Endothelial cell of umbilical vein (primary cell): ENCODE measurements at regions of chr9 and their contacts with region 1.

Region 1: DNA sequence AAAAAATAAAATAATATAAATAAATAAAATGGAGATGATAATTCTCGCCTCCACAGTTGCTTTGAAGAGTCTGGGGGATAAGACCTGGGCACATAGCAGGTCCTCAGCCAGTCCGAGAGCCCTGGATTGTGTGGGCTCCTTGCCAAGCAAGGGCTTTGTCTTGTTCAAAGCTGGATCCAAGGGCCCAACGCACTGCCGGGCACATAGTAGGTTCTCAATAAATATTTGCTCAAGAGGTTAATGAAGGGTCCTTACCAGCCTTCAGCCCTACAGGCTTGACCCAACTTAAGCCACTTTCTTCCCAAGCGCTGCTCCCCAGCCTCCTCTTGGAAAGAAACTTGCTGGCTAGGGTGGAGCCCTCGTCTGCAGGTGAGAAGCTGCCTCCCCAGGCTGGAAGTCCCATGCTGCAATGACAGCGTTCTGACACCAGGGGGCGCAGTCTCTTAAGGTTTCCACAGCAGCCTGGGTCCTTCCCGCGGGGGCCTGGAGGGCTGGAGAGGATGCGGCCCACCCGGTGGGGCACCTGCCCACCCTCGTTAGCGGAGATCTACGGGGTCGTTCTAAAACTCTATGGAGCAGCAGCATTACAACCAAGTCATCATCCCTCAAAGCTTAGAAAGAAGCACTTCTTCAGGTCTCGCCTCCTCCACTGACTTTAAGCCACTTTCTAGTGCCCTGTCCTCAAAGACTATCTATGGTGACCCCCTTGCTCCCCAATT is 115.2 kb downstream of the LHX2 start:
- DNase-seq: peak; percentile 67
- H3K4me3 ChIP-seq: no peak overlapping the region
- H3K27ac ChIP-seq: no peak overlapping the region
- H3K4me1 ChIP-seq: no peaks in the 10 kb centered on the region
- H3K27me3 ChIP-seq: no peaks in the 10 kb centered on the region
- CTCF ChIP-seq: peak; percentile 90 to 96
- POLR2A ChIP-seq: no peak

Region 2: GRCh38 chr9:124110307-124110915 is 16.3 kb before region 1 on chr9:
- CTCF ChIA-PET with region 1: interaction called, 12 read pairs
- POLR2A ChIA-PET with region 1: no interaction called
- dilution Hi-C with region 1: no loop called
- intact Hi-C with region 1: no loop called
- DNase-seq: peak; percentile 60
- H3K4me3 ChIP-seq: no peak overlapping the region
- H3K27ac ChIP-seq: no peak overlapping the region
- H3K4me1 ChIP-seq: no peaks in the 10 kb centered on the region
- H3K27me3 ChIP-seq: peaks cover 0 to 3% of the 10 kb centered on the region in 2 experiments
- CTCF ChIP-seq: no peak
- POLR2A ChIP-seq: no peak

Region 3: DNA sequence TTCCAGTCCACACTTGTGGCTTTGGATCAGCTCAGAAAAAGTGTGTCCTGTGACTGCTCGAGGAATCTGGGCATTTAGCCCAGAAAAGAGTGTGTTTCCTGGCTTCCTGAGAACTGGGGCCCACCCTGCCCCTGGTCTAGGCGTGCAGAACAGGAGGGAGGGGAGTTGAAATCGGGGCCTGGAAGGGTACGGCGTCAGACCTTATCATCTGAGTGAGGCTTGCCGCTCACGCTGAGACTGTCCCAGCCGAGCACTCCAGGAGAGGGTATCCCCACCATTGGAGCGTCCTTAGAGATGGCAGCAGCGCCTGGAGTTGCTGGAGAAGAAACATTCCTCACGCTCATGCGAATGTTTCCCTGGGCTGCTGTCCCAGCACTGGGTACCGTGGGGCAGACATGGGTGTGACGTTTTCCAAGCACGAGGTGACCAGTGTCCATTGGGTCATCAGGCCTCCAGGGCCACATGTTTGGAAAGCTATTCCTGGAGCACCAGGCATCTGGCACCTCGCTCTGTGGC is 153.5 kb after region 1 on chr9:
- CTCF ChIA-PET with region 1: interaction called, 10 read pairs
- POLR2A ChIA-PET with region 1: no interaction called
- dilution Hi-C with region 1: no loop called
- intact Hi-C with region 1: no loop called
- DNase-seq: peak; percentile 94
- H3K4me3 ChIP-seq: no peak overlapping the region
- H3K27ac ChIP-seq: peak overlapping the region; percentile 92
- H3K4me1 ChIP-seq: peaks cover 62% of the 10 kb centered on the region
- H3K27me3 ChIP-seq: no peaks in the 10 kb centered on the region
- CTCF ChIP-seq: no peak
- POLR2A ChIP-seq: peak; percentile 26

Region 4: GRCh38 chr9:124309665-124310064 is 182.9 kb after region 1 on chr9:
- CTCF ChIA-PET with region 1: interaction called, 29 read pairs
- POLR2A ChIA-PET with region 1: no interaction called
- dilution Hi-C with region 1: no loop called
- intact Hi-C with region 1: no loop called
- DNase-seq: peak; percentile 97
- H3K4me3 ChIP-seq: no peak overlapping the region
- H3K27ac ChIP-seq: peak overlapping the region; percentile 84
- H3K4me1 ChIP-seq: peaks cover 31% of the 10 kb centered on the region
- H3K27me3 ChIP-seq: no peaks in the 10 kb centered on the region
- CTCF ChIP-seq: no peak
- POLR2A ChIP-seq: no peak

Region 5: GRCh38 chr9:124342776-124343485 is 216.2 kb after region 1 on chr9:
- CTCF ChIA-PET with region 1: interaction called, 12 read pairs
- POLR2A ChIA-PET with region 1: no interaction called
- dilution Hi-C with region 1: no loop called
- intact Hi-C with region 1: no loop called
- DNase-seq: peak; percentile 49
- H3K4me3 ChIP-seq: no peak overlapping the region
- H3K27ac ChIP-seq: no peak overlapping the region
- H3K4me1 ChIP-seq: no peaks in the 10 kb centered on the region
- H3K27me3 ChIP-seq: no peaks in the 10 kb centered on the region
- CTCF ChIP-seq: no peak
- POLR2A ChIP-seq: no peak

Region 6: GRCh38 chr9:124392871-124393460 is 266.2 kb after region 1 on chr9:
- CTCF ChIA-PET with region 1: interaction called, 33 read pairs
- POLR2A ChIA-PET with region 1: no interaction called
- dilution Hi-C with region 1: no loop called
- intact Hi-C with region 1: loop called (anchors 5 kb)
- DNase-seq: peak; percentile 75
- H3K4me3 ChIP-seq: no peak overlapping the region
- H3K27ac ChIP-seq: peak overlapping the region; percentile 54
- H3K4me1 ChIP-seq: peaks cover 34% of the 10 kb centered on the region
- H3K27me3 ChIP-seq: no peaks in the 10 kb centered on the region
- CTCF ChIP-seq: peak; percentile 29 to 55
- POLR2A ChIP-seq: no peak